Calu3 (cell line): ENCODE measurements at regions of chr10 and their contacts with region 1.

Region 1: DNA sequence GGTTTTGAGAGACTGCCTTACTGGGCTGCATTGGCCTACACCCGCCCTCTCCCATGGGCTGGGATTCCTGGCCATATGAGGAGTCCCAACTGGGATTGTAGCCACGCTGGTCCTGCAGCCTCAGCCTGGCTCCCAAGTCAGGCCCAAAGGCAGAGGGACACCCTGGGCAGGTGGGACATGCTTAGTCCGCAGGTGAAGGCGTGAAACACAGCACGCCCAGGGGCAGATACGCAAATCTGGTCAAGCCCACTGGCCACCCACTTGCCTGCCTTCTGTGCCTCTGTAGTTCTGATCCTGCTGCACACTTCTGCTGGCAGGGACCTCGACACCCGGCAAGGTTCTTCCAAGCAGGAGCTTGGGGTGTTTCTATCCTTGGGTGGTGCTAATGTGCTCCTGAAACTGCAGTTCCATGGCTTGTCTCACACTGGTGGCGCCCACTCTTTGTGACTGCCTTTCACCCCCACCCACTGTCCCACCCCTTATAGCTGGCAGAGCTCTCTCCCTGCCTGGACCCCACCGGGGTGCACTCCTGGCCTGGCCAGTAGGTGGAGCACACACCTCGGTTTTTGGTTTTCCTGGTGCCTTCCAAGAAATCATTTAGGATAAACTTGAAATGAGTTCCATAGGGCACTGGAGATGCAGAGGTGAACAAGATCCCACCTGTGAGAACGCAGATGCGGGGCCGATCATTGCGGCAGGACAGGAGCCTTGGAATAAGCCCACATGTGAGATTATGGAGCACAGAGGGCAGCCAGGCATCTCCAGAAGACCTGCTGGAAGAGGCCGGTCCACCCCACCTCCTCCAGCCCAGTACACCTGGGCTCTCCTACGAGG is 47.9 kb downstream of the MKI67 start:
- DNase-seq: peak; percentile 70
- H3K4me3 Mint-ChIP-seq: no peak overlapping the region
- H3K27ac Mint-ChIP-seq: no peak overlapping the region
- H3K4me1 Mint-ChIP-seq: no peaks in the 10 kb centered on the region
- H3K27me3 Mint-ChIP-seq: no peaks in the 10 kb centered on the region
- CTCF ChIP-seq: peak; percentile 62

Region 2: GRCh38 chr10:128150045-128150493 is 71.7 kb after region 1 on chr10:
- CTCF ChIA-PET with region 1: no interaction called
- intact Hi-C with region 1: loop called (anchors 1 kb)
- DNase-seq: peak; percentile 79
- H3K4me3 Mint-ChIP-seq: peak overlapping the region; percentile 62
- H3K27ac Mint-ChIP-seq: no peak overlapping the region
- H3K4me1 Mint-ChIP-seq: no peaks in the 10 kb centered on the region
- H3K27me3 Mint-ChIP-seq: peaks cover 33% of the 10 kb centered on the region
- CTCF ChIP-seq: peak; percentile 83